Tibial artery (tissue), 4 donors: ENCODE measurements at regions of chr2 and their contacts with region 1.

Region 1: DNA sequence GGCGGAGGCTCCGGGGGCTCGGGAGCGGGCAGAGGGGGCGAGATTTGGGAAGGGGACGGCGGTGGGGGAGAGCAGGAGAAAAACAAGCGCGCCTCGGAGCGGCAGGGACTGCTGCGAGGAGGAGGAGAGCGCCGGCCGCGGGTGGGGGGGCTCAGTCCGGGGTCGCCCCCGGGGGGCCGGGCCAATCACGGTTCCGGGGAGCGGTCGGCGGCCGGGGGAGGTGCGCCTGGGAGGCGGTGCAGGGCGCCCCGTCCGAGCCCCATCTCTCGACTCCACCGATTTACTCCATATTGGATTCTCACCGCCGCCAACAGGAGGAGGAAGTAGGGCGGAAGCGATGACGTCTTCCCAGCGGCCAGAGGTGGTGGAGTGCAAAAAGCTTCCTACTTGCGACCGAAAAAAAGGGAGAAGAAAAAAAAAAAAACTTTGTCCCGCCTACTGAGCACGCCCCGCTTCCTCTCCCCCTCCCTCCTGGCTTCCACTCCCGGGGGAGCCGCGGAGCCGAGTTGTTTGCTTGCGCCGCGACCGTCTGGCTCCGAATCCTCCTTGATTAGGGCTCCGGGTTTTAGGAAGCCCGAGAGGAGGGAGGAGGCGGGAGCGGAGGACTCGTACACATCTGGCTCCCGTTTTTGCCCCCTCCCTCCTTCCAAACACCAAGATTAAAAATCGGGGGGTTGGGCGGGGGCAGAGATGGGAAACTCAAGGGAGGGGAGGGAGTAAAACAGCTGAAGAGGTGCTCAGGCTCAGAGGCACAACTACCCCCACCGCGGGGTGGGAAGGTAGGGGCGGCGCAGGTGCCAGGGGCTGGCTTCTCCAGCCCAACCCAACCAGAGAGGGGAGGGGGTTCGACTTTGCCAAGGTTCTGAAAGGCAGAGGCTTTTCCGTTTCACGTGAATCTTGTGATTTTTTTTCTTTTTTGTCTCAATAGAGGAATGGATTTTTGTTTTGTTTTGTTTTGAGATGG is at the start of gene SPRED2:
- DNase-seq: peak; percentile 96 to 97
- H3K4me3 ChIP-seq: peak within 1 kb of the TSS; percentile 88 to 97
- H3K27ac ChIP-seq: peak within 1 kb of the TSS; percentile 90 to 94
- H3K4me1 ChIP-seq: peaks cover 0 to 33% (median 16%) of the 10 kb centered on the region in 4 donors
- H3K27me3 ChIP-seq: no peaks in the 10 kb centered on the region
- CTCF ChIP-seq: peak; percentile 21 to 22

Region 2: GRCh38 chr2:65232636-65233035 is 199.9 kb before region 1 on chr2:
- intact Hi-C with region 1: loop called (anchors 5 kb)
- DNase-seq: no peak
- H3K4me3 ChIP-seq: peak overlapping the region in 1 of 2 donors; percentile 5
- H3K27ac ChIP-seq: peak overlapping the region; percentile 65 to 77
- H3K4me1 ChIP-seq: peaks cover 0 to 90% (median 45%) of the 10 kb centered on the region in 4 donors
- H3K27me3 ChIP-seq: no peaks in the 10 kb centered on the region
- CTCF ChIP-seq: no peak

Region 3: DNA sequence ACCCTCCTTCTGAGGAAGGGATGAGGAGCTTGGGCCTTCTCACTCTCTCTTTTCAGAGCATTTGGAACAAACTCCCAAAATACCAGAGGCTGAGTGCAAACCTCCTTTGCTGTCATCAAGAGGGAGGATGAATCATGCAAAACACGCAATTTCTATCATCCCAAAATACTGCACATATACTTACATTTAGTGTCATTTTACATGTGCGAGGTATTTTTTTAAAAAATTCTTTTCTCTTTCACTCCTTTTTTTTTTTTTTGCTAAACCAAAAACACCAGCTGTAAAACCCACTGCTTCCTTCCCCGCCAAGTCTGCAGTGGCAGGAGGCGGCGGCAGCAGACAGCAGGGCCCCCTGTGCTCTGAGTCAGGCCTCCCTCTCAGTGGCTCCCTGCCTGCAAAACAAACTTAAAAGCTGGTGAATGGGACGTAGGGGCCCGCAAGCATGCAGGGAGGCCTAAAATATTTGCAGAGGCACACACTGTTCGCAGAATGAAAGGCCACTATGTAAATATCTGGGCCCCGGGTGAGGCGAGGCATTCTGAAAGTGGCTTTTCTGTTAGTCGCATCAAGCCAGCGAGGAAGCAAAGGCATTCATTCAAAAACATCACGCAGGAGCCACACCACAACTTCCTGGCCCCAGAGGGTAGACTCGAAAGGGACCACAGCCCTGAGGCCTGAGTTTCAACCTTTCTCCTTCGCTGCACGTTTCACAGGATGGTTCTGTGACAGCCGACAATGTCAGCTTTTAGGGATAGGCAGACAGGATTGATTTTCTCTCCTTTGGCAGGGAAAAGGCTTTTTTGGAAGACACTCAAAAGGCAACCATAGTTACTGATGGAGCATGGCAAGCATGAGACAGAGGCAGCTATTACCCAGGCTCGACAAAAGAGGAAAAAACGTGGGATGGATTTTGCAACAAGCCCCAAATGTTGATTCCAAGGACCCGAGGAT is 131.5 kb before region 1 on chr2:
- intact Hi-C with region 1: loop called (anchors 10 kb)
- DNase-seq: peak; percentile 51 to 72
- H3K4me3 ChIP-seq: peak overlapping the region; percentile 13 to 31
- H3K27ac ChIP-seq: peak overlapping the region; percentile 71 to 75
- H3K4me1 ChIP-seq: peaks cover 0 to 35% (median 33%) of the 10 kb centered on the region in 4 donors
- H3K27me3 ChIP-seq: no peaks in the 10 kb centered on the region
- CTCF ChIP-seq: no peak